ENCODE measurements at regions of chr10 and their contacts with region 1.

Region 1: GRCh38 chr10:12264204-12264940 is 68.4 kb downstream of the CDC123 start:
- DNase-seq: peak; percentile 99
- ATAC-seq: peak; percentile 85
- H3K4me3 ChIP-seq: peak overlapping the region; percentile 23; the same call in 1 of the 2 replicates
- H3K27ac ChIP-seq: peak overlapping the region; percentile 52
- H3K4me1 ChIP-seq: peaks cover 25% of the 10 kb centered on the region
- H3K27me3 ChIP-seq: no peaks in the 10 kb centered on the region
- CTCF ChIP-seq: peak; percentile 68 to 92 (median 74)
- EP300 ChIP-seq: peak; percentile 64 to 70; a peak in 3 of 4 replicates
- POLR2A ChIP-seq: peak; percentile 46
- RAD21 ChIP-seq: peak; percentile 78

Region 2: GRCh38 chr10:12241810-12242529 is 22.4 kb before region 1 on chr10:
- CTCF ChIA-PET with region 1: interaction called, 5 read pairs
- POLR2A ChIA-PET with region 1: no interaction called
- RAD21 ChIA-PET with region 1: interaction called, 12 read pairs
- SMC1A ChIA-PET with region 1: interaction called, 10 read pairs
- in situ Hi-C with region 1: no loop called
- intact Hi-C with region 1: no loop called
- DNase-seq: peak; percentile 41
- ATAC-seq: peak; percentile 69
- H3K4me3 ChIP-seq: peak overlapping the region; percentile 15; the same call in 1 of the 2 replicates
- H3K27ac ChIP-seq: peak overlapping the region; percentile 93
- H3K4me1 ChIP-seq: peaks cover 33% of the 10 kb centered on the region
- H3K27me3 ChIP-seq: no peaks in the 10 kb centered on the region
- CTCF ChIP-seq: no peak
- EP300 ChIP-seq: no peak
- POLR2A ChIP-seq: no peak
- RAD21 ChIP-seq: no peak

Region 3: DNA sequence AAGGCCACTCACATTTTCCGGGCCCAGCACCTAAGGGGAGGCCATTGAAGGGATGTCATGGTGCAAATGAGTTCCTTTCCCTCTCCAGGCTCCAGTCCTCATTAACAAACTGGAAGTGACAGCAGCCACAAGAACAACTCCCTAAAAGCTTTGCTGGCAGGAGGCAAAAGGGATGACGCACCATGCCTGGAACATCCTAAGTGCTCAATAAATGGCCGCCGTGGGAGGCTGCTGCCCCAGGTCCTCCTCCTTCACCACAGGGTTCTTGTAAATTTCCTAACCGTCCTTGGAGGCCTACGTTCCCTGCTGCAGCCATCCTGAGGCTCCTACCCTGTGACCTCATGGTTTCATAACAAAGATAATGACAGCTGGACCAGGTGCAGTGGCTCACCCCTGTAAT is 43.7 kb after region 1 on chr10:
- CTCF ChIA-PET with region 1: interaction called, 5 read pairs
- POLR2A ChIA-PET with region 1: interaction called, 5 read pairs
- RAD21 ChIA-PET with region 1: interaction called, 7 read pairs
- SMC1A ChIA-PET with region 1: interaction called, 3 read pairs
- in situ Hi-C with region 1: no loop called
- intact Hi-C with region 1: loop called (anchors 2 kb)
- DNase-seq: no peak
- ATAC-seq: peak; percentile 20
- H3K4me3 ChIP-seq: no peak overlapping the region
- H3K27ac ChIP-seq: peak overlapping the region; percentile 60
- H3K4me1 ChIP-seq: peaks cover 20% of the 10 kb centered on the region
- H3K27me3 ChIP-seq: no peaks in the 10 kb centered on the region
- CTCF ChIP-seq: no peak
- EP300 ChIP-seq: no peak
- POLR2A ChIP-seq: no peak
- RAD21 ChIP-seq: no peak

Region 4: GRCh38 chr10:12348870-12349628 is 84.7 kb after region 1 on chr10 and contains the start of gene CAMK1D:
- CTCF ChIA-PET with region 1: interaction called, 63 read pairs
- POLR2A ChIA-PET with region 1: interaction called, 10 read pairs
- RAD21 ChIA-PET with region 1: interaction called, 59 read pairs
- SMC1A ChIA-PET with region 1: interaction called, 68 read pairs
- in situ Hi-C with region 1: no loop called
- intact Hi-C with region 1: loop called (anchors 1 kb)
- DNase-seq: no peak
- ATAC-seq: peak; percentile 57
- H3K4me3 ChIP-seq: peak within 1 kb of the TSS; percentile 92
- H3K27ac ChIP-seq: peak within 1 kb of the TSS; percentile 67
- H3K4me1 ChIP-seq: peaks cover 27% of the 10 kb centered on the region
- H3K27me3 ChIP-seq: no peaks in the 10 kb centered on the region
- CTCF ChIP-seq: peak; percentile 9 to 19 (median 15); a peak in 1 of 6 replicates
- EP300 ChIP-seq: no peak
- POLR2A ChIP-seq: peak; percentile 85
- RAD21 ChIP-seq: peak; percentile 11; the same call in 1 of the 2 replicates
- polyA plus RNA-seq, gene CAMK1D: 2.1 to 5.5 TPM

Region 5: DNA sequence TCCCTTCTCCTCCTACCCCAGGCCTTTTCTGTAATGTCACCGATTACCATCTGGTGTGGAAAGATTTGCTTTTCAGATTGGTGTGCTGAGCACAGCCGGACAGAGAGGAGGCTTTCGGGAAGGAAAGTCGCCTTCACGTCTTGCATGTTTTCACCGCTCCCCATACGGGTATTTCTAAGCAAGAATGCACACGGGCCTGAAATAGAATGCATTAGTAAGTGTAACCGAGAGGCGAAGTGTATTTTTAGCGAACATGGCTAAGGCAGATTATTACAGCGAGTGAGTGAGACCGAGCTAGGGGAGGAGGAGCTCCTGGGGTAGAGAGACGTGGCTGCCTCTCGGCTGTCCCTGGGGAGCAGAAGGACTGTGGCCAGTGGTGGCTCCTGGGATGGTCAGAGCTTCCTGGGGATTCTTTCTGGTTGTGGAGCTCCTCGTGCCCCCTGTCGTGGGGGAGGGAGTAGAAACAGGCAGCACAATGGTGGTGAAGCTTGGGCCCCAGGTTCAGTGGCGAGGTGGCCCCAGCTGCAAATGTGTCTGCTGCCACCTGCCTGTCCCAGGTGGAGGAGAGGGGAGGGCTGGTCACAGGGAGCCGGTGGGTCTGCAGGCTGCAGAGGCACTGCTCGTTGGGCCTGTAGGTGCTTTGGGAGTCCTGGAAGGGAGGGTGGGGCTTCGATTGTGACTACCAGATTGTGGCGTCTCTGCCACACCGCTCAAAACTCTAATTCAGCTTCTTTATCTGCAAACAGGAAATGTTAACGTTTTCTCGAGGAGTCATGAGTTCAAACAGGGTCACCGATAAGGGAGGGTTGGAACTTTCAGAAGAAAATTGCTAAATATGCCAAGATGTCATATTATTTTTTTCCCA is 220.8 kb after region 1 on chr10:
- CTCF ChIA-PET with region 1: interaction called, 52 read pairs
- POLR2A ChIA-PET with region 1: interaction called, 13 read pairs
- RAD21 ChIA-PET with region 1: interaction called, 105 read pairs
- SMC1A ChIA-PET with region 1: interaction called, 55 read pairs
- in situ Hi-C with region 1: no loop called
- intact Hi-C with region 1: loop called (anchors 1 kb)
- DNase-seq: peak; percentile 76
- ATAC-seq: peak; percentile 85
- H3K4me3 ChIP-seq: no peak overlapping the region
- H3K27ac ChIP-seq: peak overlapping the region; percentile 76
- H3K4me1 ChIP-seq: peaks cover 20% of the 10 kb centered on the region
- H3K27me3 ChIP-seq: no peaks in the 10 kb centered on the region
- CTCF ChIP-seq: peak in 2 of 3 experiments; percentile 37 to 56; a peak in 3 of 6 replicates
- EP300 ChIP-seq: no peak
- POLR2A ChIP-seq: peak; percentile 37
- RAD21 ChIP-seq: peak; percentile 31; the same call in 1 of the 2 replicates

Region 6: GRCh38 chr10:12710594-12711349 is 446.4 kb after region 1 on chr10:
- CTCF ChIA-PET with region 1: interaction called, 83 read pairs
- POLR2A ChIA-PET with region 1: no interaction called
- RAD21 ChIA-PET with region 1: interaction called, 42 read pairs
- SMC1A ChIA-PET with region 1: interaction called, 58 read pairs
- in situ Hi-C with region 1: no loop called
- intact Hi-C with region 1: loop called (anchors 1 kb)
- DNase-seq: peak; percentile 26
- ATAC-seq: peak; percentile 98
- H3K4me3 ChIP-seq: no peak overlapping the region
- H3K27ac ChIP-seq: peak overlapping the region; percentile 43; the same call in 1 of the 2 replicates
- H3K4me1 ChIP-seq: peaks cover 2% of the 10 kb centered on the region; the same call in 1 of the 2 replicates
- H3K27me3 ChIP-seq: no peaks in the 10 kb centered on the region
- CTCF ChIP-seq: peak; percentile 93 to 97 (median 94)
- EP300 ChIP-seq: no peak
- POLR2A ChIP-seq: no peak
- RAD21 ChIP-seq: peak; percentile 97

Measured in GM12878 (cell line).